Spleen (tissue), 13 donors: ENCODE measurements at regions of chr2 and their contacts with region 1.

Region 1: GRCh38 chr2:149017116-149017985 is 21.1 kb upstream of the LYPD6B start:
- DNase-seq: peak; percentile 83
- H3K4me3 ChIP-seq: no peak overlapping the region
- H3K27ac ChIP-seq: no peak overlapping the region
- H3K4me1 ChIP-seq: peaks cover 0 to 38% (median 12%) of the 10 kb centered on the region in 6 donors
- H3K27me3 ChIP-seq: peaks cover 0 to 4% (median 0%) of the 10 kb centered on the region in 7 donors
- CTCF ChIP-seq: peak; percentile 39 to 95 (median 85)
- POLR2A ChIP-seq: no peak

Region 2: GRCh38 chr2:149080946-149081345 is 63.6 kb after region 1 on chr2:
- intact Hi-C with region 1: no loop called
- DNase-seq: no peak
- H3K4me3 ChIP-seq: no peak overlapping the region
- H3K27ac ChIP-seq: no peak overlapping the region
- H3K4me1 ChIP-seq: peaks cover 0 to 30% (median 3%) of the 10 kb centered on the region in 6 donors
- H3K27me3 ChIP-seq: no peaks in the 10 kb centered on the region
- CTCF ChIP-seq: no peak
- POLR2A ChIP-seq: no peak

Region 3: DNA sequence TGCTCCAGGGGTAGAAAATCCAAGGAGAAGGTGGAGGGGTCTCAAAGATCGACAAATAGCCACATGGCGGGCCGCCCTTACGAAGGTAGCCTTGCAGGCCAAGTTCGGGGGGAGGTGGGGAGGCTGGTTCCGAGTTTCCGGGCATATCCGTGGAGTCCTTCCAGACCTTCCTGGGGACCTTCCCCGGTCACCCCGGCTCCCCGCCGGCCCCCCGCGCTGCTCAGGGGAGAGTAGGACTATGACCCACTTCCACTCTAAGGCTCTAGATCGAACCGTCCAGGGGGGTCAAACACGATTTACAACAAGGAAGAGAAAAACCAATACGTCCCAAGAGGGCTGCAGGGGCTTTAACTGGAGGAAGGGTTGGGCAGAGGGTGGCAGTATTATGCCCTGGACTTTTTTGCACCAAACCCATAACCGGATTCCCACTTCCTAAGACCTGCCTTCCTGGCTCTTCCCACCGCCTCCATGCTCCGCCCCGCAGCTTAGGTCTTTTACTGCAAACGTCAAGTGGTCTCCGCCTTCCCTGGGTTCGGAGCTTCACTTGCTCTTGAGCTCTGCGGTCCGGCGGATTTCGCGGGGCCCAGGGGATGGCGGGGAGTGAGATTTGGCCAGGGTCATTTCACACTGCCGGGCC is 312.3 kb after region 1 on chr2:
- intact Hi-C with region 1: loop called (anchors 10 kb)
- DNase-seq: no peak
- H3K4me3 ChIP-seq: peak overlapping the region; percentile 27 to 72 (median 52)
- H3K27ac ChIP-seq: peak overlapping the region in 1 of 8 donors; percentile 43
- H3K4me1 ChIP-seq: peaks cover 0 to 24% (median 15%) of the 10 kb centered on the region in 6 donors
- H3K27me3 ChIP-seq: peaks cover 0 to 67% (median 35%) of the 10 kb centered on the region in 7 donors
- CTCF ChIP-seq: no peak
- POLR2A ChIP-seq: no peak

Region 4: DNA sequence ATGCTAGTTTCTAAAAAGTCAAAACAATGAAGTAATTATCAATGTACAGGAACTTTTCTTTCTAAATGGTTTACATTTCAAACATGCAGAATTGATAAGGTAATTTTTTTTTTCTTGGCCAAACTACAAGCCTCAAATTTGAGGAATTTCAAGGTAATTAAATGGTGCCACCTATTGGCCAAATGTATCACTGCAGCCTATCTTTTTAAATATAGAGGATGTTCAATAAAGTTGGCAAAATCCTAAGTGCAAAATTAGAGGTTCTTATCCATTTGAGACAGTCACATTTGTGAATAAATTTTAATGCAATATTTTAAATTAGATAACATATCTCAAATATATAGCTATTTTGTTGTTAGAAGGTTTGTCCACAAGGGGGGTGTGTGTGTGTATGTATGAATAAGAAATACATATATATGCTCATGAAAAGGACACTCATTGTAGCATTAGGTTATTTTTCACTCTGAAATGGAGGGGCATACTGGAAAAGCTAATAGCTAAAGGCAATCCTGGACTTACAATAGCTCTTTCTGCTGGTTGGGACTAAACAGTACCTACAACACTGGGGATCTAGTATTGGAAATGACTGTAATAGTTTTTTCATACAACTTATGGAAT is 544.1 kb after region 1 on chr2:
- intact Hi-C with region 1: loop called (anchors 5 kb)
- DNase-seq: no peak
- H3K4me3 ChIP-seq: no peak overlapping the region
- H3K27ac ChIP-seq: no peak overlapping the region
- H3K4me1 ChIP-seq: peaks cover 0 to 36% (median 21%) of the 10 kb centered on the region in 6 donors
- H3K27me3 ChIP-seq: no peaks in the 10 kb centered on the region
- CTCF ChIP-seq: peak; percentile 47 to 86 (median 79)
- POLR2A ChIP-seq: no peak